IMR-90 (cell line): ENCODE measurements at regions of chr3 and their contacts with region 1.

Region 1: DNA sequence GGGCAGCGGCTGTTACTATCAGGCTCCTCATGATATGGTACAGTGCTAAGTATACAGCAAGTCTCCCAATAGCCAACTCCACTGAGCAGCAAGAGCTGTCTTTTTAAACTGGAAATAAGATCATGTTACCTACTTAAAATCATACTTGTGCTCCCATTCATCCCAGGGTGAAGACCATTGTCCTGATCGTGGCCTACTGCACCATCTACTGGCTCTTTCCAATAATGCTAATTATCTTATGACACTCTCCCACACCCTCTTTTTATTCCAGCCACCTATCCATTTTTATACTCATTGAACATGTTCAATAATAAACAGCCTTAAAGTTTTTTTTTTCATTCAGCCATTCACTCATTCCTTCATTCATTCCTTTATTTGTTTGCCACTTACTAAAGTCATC is 117.7 kb downstream of the GBE1 start:
- DNase-seq: peak; percentile 45
- ATAC-seq: peak; percentile 79
- H3K4me3 ChIP-seq: no peak overlapping the region
- H3K27ac ChIP-seq: no peak overlapping the region
- H3K4me1 ChIP-seq: no peaks in the 10 kb centered on the region
- H3K27me3 ChIP-seq: no peaks in the 10 kb centered on the region
- CTCF ChIP-seq: peak; percentile 47
- POLR2A ChIP-seq: no peak
- RAD21 ChIP-seq: peak; percentile 52

Region 2: DNA sequence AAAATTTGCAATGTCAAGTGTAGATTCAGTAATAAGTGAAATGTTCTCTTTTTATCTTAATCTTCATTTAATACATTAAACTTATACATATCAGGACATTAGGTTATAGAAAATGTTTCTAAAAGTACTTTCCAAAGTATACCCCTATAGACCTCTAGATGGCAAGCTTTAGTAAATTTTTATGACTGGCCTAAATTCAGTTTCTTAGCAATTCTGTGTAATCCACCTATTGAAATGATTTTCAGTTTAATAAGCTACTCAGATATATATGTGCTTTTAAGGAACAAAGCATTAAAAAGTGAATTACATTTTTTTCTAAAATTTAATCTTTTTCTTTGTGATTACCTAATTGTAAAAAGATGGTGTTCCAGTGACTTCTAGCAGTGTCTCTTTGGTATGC is 224.5 kb before region 1 on chr3:
- CTCF ChIA-PET with region 1: interaction called, 3 read pairs
- POLR2A ChIA-PET with region 1: no interaction called
- dilution Hi-C with region 1: no loop called
- in situ Hi-C with region 1: no loop called
- intact Hi-C with region 1: loop called (anchors 2 kb)
- DNase-seq: peak; percentile 22
- ATAC-seq: peak; percentile 72
- H3K4me3 ChIP-seq: no peak overlapping the region
- H3K27ac ChIP-seq: no peak overlapping the region
- H3K4me1 ChIP-seq: no peaks in the 10 kb centered on the region
- H3K27me3 ChIP-seq: no peaks in the 10 kb centered on the region
- CTCF ChIP-seq: peak; percentile 55
- POLR2A ChIP-seq: no peak
- RAD21 ChIP-seq: peak; percentile 40

Region 3: GRCh38 chr3:81437683-81438082 is 206.0 kb before region 1 on chr3:
- CTCF ChIA-PET with region 1: no interaction called
- POLR2A ChIA-PET with region 1: no interaction called
- dilution Hi-C with region 1: no loop called
- in situ Hi-C with region 1: no loop called
- intact Hi-C with region 1: no loop called
- DNase-seq: no peak
- ATAC-seq: no peak
- H3K4me3 ChIP-seq: no peak overlapping the region
- H3K27ac ChIP-seq: no peak overlapping the region
- H3K4me1 ChIP-seq: no peaks in the 10 kb centered on the region
- H3K27me3 ChIP-seq: no peaks in the 10 kb centered on the region
- CTCF ChIP-seq: no peak
- POLR2A ChIP-seq: no peak
- RAD21 ChIP-seq: no peak

Region 4: DNA sequence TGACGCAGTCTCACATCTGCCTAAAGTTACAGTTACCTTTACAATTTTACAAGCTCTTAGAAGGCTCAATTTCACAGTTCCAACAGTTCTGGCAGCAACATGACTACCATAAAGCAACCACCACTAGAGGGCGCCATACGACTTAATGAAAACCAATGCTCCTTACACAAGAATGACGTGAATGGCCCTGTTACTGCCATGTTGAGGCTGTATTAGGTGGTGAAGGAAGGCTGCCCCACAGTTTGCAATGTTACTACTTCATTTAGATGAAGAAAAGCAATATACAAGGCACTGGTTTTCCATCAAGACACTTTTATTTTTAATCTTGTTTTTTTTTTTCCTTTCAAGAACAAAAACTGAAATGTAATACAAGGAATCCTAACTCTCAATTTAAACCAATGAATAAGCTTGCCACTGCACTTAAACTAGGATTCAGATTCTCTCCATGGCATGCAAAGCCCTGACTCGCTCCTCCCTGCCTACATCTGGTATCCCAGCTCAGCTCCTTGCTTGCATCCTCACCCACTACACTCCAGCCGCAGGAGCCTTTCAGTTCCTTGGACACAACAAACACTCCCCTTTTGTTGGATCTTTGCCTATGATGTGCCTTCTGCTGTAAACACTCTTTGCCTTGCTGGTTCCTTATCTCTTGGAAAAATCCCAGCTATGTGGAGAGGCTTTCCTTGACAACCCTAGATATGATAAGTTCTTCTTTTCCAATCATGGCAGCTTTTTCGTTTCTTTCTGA is 153.0 kb before region 1 on chr3:
- CTCF ChIA-PET with region 1: interaction called, 4 read pairs
- POLR2A ChIA-PET with region 1: no interaction called
- dilution Hi-C with region 1: no loop called
- in situ Hi-C with region 1: no loop called
- intact Hi-C with region 1: loop called (anchors 1 kb)
- DNase-seq: peak; percentile 89
- ATAC-seq: peak; percentile 85
- H3K4me3 ChIP-seq: no peak overlapping the region
- H3K27ac ChIP-seq: no peak overlapping the region
- H3K4me1 ChIP-seq: 0 out of 2 replicates have a peak, but pooled peaks cover 2% of the 10 kb centered on the region
- H3K27me3 ChIP-seq: no peaks in the 10 kb centered on the region
- CTCF ChIP-seq: peak; percentile 78
- POLR2A ChIP-seq: no peak
- RAD21 ChIP-seq: peak; percentile 62

Region 5: DNA sequence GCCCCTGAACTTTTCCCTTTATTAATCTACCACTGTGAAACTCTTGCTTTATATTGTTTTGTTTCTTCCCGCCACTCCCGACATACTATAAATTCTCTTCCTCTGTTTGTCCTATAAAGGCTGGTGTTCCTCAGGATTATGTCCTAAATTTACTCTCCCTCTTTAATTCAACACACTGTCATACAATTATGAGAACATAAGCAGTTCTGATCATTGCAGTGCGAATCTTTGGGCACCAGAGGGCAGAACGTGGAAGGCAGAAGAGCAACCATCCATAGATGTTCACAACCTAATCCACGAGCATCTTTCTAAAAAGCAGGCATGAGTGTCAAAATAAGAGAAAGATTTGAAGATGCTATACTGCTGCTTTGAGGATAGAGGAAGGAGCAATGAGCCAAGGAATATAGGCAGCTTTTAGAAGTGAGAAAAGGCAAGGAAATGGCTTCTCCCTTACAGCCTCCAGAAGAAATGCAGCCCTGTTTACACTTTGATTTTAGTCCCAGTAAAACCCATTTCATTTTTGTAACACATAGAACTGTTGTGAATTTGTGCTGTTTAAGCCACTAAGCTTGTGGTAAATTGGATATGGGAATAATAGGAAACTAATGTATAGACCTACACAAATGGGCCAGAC is 61.6 kb before region 1 on chr3:
- CTCF ChIA-PET with region 1: interaction called, 9 read pairs
- POLR2A ChIA-PET with region 1: no interaction called
- dilution Hi-C with region 1: no loop called
- in situ Hi-C with region 1: no loop called
- intact Hi-C with region 1: loop called (anchors 1 kb)
- DNase-seq: peak; percentile 47
- ATAC-seq: peak; percentile 88
- H3K4me3 ChIP-seq: no peak overlapping the region
- H3K27ac ChIP-seq: no peak overlapping the region
- H3K4me1 ChIP-seq: no peaks in the 10 kb centered on the region
- H3K27me3 ChIP-seq: no peaks in the 10 kb centered on the region
- CTCF ChIP-seq: peak; percentile 62
- POLR2A ChIP-seq: no peak
- RAD21 ChIP-seq: peak; percentile 69

Region 6: GRCh38 chr3:82055792-82056191 is 412.1 kb after region 1 on chr3:
- CTCF ChIA-PET with region 1: no interaction called
- POLR2A ChIA-PET with region 1: no interaction called
- dilution Hi-C with region 1: no loop called
- in situ Hi-C with region 1: no loop called
- intact Hi-C with region 1: no loop called
- DNase-seq: no peak
- ATAC-seq: no peak
- H3K4me3 ChIP-seq: no peak overlapping the region
- H3K27ac ChIP-seq: no peak overlapping the region
- H3K4me1 ChIP-seq: no peaks in the 10 kb centered on the region
- H3K27me3 ChIP-seq: no peaks in the 10 kb centered on the region
- CTCF ChIP-seq: no peak
- POLR2A ChIP-seq: no peak
- RAD21 ChIP-seq: no peak